ENCODE measurements at regions of chr4 and their contacts with region 1.

Region 1: GRCh38 chr4:87375719-87376291 is 15.2 kb downstream of the HSD17B11 start:
- DNase-seq: peak; percentile 38
- H3K4me3 ChIP-seq: no peak overlapping the region
- H3K27me3 ChIP-seq: no peaks in the 10 kb centered on the region
- CTCF ChIP-seq: peak; percentile 82

Region 2: GRCh38 chr4:86948276-86948675 is 427.5 kb before region 1 on chr4:
- CTCF ChIA-PET with region 1: no interaction called
- POLR2A ChIA-PET with region 1: no interaction called
- DNase-seq: no peak
- H3K4me3 ChIP-seq: no peak overlapping the region
- H3K27me3 ChIP-seq: no peaks in the 10 kb centered on the region
- CTCF ChIP-seq: no peak

Region 3: GRCh38 chr4:87363567-87363966 is 12.2 kb before region 1 on chr4:
- CTCF ChIA-PET with region 1: interaction called, 12 read pairs
- POLR2A ChIA-PET with region 1: no interaction called
- DNase-seq: no peak
- H3K4me3 ChIP-seq: no peak overlapping the region
- H3K27me3 ChIP-seq: no peaks in the 10 kb centered on the region
- CTCF ChIP-seq: no peak

Region 4: GRCh38 chr4:87390891-87391575 is 15.2 kb after region 1 on chr4 and contains the start of gene HSD17B11:
- CTCF ChIA-PET with region 1: interaction called, 12 read pairs
- POLR2A ChIA-PET with region 1: no interaction called
- DNase-seq: peak; percentile 68
- H3K4me3 ChIP-seq: peak within 1 kb of the TSS; percentile 43
- H3K27me3 ChIP-seq: no peaks in the 10 kb centered on the region
- CTCF ChIP-seq: peak; percentile 24; the same call in 1 of the 2 replicates
- polyA plus RNA-seq, gene HSD17B11: 11.2 and 30.8 TPM in 2 replicates

Region 5: DNA sequence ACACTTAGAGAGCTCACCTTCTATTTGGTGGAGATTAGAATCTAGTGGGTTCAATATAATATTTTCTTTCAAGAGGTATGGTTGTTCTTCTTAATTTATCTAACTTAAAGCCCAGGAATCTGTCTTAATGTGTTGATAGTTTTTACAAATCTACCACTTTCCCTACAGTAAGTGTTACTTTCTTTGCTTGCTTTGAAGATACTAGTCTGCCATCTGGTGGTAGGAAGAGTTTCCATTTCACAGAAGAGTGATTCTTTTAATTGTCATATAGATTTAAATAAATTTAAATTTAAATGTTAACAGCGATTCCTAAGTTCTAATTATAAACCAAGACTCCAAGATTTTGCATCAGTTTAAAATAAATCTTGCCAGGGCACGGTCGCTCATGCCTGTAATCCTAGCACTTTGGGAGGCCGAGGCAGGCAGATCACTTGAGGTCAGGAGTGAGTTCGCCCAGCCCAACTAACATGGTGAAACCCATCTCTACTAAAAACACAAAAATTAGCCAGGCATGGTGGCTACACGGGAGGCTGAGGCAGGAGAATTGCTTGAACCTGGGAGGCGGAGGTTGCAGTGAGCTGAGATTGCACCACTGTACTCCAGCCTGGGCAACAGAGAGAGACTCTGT is 90.0 kb after region 1 on chr4:
- CTCF ChIA-PET with region 1: interaction called, 68 read pairs
- POLR2A ChIA-PET with region 1: no interaction called
- DNase-seq: no peak
- H3K4me3 ChIP-seq: no peak overlapping the region
- H3K27me3 ChIP-seq: no peaks in the 10 kb centered on the region
- CTCF ChIP-seq: peak; percentile 52